ENCODE measurements at regions of chr6 and their contacts with region 1.

Region 1: DNA sequence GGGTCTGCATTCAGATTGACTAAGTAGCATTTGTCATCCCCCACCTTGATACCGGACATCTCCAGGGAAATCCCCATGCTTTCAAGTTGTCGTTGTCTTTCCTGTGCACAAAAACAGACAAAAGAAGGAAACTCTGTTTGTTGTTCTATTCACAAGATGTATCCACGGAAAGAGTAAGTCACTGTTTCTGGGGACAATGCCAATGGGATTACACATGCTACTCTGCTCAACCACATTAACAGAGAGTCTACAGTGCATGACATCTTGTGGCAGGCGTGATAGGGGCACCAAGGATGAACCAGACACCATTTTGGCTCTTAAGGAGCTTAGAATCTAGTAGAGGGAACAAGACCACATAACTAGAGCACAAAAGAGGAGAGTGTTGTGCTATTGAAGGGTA is 124.4 kb upstream of the NUP153 start:
- DNase-seq: no peak
- ATAC-seq: peak; percentile 32

Region 2: DNA sequence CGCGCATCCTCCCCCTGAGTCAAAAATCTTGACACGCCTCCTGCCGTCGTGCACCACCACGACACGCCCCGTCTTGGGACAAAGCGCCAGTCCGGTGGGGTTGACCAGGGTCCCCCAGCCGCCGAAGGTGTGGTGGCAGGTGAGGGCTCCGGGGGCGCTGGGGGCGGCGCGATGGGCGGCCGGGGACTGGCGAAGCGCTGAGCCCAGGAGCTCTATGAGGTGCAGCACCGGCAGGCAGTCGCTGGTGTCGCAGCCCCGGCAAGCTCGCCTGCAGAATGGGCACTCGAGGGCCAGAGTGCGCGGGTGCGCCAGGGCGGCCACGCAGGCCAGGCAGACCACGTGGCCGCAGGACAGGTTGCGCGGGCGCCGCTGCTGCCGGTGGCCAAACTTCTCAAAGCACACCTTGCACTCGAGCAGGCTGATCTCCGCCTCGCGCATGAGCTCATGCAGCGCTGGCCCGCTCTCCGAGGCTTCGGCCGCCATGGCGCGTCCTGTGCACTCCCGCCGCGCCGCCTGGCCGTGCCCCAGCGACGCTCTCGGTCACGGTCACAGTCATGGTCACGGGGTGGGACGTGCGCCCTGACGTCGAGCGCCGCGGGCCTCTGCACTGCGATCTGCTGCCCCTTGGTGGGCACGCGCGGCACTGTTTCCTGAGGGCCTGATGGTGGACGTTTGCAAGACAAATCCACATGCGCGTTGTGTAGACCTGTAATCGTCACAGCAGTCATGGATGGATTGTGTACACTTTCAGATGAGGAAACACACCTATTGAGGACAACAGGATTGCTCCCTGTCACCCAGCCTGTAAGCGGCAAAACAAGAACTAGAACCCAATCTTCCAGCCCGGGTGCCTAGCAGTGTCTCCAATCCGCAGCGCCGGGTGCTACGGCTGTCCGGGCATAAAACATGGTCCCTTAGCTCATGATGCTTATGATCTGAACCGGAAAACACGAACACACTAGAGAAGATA is 291.3 kb after region 1 on chr6 and contains the start of gene NHLRC1:
- intact Hi-C with region 1: loop called (anchors 10 kb)
- DNase-seq: peak; percentile 94
- ATAC-seq: peak; percentile 100
- total RNA-seq, gene NHLRC1: 1.2 TPM